Left cardiac atrium (tissue), 4 donors: ENCODE measurements at regions of chr9 and their contacts with region 1.

Region 1: GRCh38 chr9:111298731-111299598 is 31.1 kb downstream of the OR2K2 start:
- DNase-seq: peak; percentile 48
- ATAC-seq: peak; percentile 84 to 89

Region 2: DNA sequence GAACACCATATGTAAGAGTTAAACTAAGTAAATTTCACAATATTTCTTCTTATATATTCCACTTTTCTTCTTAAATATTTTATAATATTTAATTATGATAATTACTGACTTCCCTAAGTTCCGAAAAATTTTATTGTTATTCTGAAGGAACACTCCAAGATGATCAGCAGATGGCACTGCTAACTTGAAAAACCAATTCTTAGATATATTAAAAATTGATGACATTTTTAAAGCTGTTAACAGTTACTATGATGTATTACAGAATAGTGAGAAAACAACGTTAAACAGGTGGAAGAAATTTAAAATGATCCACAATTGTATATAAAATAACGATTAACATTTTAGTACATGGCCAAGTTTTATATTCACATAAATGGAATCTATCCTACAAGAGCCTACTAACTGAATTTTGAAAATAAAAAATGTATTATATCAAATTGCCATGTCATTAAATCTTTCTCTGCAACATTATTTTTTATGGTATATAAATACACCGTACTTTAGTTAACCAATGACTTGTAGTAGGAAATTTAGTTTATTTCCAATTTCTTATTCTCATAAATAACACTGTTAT is 660.5 kb before region 1 on chr9:
- intact Hi-C with region 1: loop called (anchors 5 to 10 kb)
- DNase-seq: no peak
- ATAC-seq: no peak

Region 3: DNA sequence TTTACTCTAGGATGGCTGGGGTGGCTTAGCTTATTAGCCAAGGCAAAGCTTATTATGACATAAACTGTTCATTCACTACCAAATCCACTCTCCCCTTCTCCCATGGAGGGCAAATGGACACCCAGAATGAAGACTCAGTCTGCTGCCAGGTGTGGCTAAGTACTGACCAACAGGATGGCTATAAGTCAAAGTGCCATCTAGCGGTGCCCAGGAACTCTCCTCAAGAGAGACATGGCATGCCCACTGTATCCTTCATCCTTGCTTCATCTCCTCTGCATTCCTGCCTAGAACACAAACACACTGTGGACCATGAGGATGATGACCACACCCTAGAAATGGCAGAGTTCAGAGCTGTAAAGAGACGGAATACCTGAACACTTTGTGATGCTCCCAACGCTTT is 70.9 kb after region 1 on chr9:
- intact Hi-C with region 1: no loop called
- DNase-seq: no peak
- ATAC-seq: no peak